ENCODE measurements at regions of chr6 and their contacts with region 1.

Region 1: DNA sequence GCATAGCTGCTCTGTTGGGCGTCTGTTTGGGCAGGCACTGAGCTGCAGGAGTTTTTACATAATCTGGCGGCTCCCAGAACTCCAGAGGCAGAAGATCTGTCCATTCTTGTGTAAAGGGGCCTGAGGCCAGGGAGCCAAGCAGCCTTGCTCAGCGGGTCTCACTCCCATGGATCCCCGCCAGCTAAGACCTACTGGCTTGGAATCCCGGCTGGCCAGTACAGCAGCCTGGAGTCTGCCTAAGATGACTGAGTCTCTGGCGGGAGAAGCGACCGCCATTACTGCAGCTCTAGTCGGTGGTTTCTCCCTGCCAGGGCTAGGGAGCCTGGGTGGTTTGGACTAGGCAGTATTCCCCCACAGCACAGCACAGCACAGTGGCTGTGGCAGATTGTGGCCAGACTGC is 268.4 kb upstream of the SYNCRIP start:
- DNase-seq: no peak
- H3K4me3 ChIP-seq: no peak overlapping the region
- H3K27ac ChIP-seq: no peak overlapping the region
- H3K4me1 ChIP-seq: no peaks in the 10 kb centered on the region
- H3K27me3 ChIP-seq: no peaks in the 10 kb centered on the region
- CTCF ChIP-seq: no peak
- POLR2A ChIP-seq: no peak

Region 2: DNA sequence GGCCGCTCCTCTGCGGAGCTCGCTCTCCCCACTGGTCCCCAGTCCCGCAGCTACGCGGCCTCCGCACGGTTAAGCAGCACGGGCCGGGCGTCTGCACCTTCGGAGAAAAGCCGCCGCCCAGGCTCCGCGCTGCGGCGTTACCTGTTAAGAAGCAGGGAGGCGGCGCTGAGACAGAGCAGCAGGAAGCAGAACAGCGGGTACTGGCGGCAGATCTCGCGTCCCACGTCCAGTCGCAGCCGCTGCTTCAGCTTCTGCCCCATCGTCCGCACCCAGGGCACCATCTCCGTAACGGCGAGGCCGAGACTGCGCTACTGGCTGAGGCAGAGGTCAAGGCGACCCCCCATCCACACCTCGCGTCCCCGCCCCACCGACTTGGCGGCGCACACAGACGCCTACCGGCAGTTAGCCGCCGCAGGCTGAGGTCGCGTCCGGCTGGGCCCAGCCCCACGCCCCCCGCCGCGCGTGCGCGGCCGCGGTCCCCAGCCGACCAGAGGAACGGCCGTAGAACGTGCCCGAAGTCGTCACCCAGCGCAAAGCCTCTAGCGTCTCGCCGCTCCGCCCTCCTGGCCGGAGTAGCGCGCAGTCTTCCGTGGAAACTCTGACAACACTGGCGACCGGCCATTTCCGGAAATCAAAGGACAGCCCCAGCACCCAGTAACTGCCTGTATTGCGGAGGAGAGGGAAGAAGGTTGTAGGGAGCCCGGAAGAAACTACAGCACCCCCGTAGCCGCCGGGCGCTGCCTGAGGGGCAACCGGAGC is 317.4 kb before region 1 on chr6 and contains the start of gene SNX14:
- intact Hi-C with region 1: no loop called
- DNase-seq: peak; percentile 95 to 98 (median 97)
- H3K4me3 ChIP-seq: peak within 1 kb of the TSS; percentile 36 to 85 (median 76)
- H3K27ac ChIP-seq: peak within 1 kb of the TSS; percentile 73 to 98 (median 95)
- H3K4me1 ChIP-seq: peaks cover 13 to 16% of the 10 kb centered on the region in 2 donors
- H3K27me3 ChIP-seq: no peaks in the 10 kb centered on the region
- CTCF ChIP-seq: peak in 2 of 6 experiments; percentile 32 to 34
- POLR2A ChIP-seq: peak; percentile 84 to 93
- total RNA-seq, gene SNX14: 60.0 to 141 (median 83.4) TPM

Region 3: DNA sequence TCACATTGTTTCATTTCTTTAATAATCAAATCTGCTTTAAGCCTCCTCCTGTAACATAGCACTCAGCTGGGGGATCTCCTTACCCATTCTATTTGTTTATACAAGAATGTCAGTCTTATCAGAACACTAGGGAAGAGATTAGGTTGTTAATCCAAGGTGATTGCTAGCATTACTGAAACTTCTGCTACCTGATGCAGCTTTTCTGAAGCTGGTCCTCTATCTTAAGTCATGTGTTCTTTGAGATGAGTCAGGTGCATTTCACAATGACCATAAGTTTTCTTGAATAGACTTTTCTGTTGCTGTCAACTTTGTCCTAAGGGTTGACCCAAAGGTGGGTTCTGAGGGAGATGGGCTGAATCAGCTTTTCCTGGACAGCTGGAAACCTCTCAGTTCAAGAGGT is 207.7 kb before region 1 on chr6:
- intact Hi-C with region 1: no loop called
- DNase-seq: no peak
- H3K4me3 ChIP-seq: no peak overlapping the region
- H3K27ac ChIP-seq: no peak overlapping the region
- H3K4me1 ChIP-seq: no peaks in the 10 kb centered on the region
- H3K27me3 ChIP-seq: no peaks in the 10 kb centered on the region
- CTCF ChIP-seq: no peak
- POLR2A ChIP-seq: no peak

Region 4: GRCh38 chr6:85764844-85765243 is 146.2 kb before region 1 on chr6:
- intact Hi-C with region 1: no loop called
- DNase-seq: no peak
- H3K4me3 ChIP-seq: no peak overlapping the region
- H3K27ac ChIP-seq: no peak overlapping the region
- H3K4me1 ChIP-seq: no peaks in the 10 kb centered on the region
- H3K27me3 ChIP-seq: no peaks in the 10 kb centered on the region
- CTCF ChIP-seq: no peak
- POLR2A ChIP-seq: no peak

Region 5: GRCh38 chr6:86192123-86192522 is 281.1 kb after region 1 on chr6:
- intact Hi-C with region 1: loop called in 1 of 2 experiments (anchors 10 kb)
- DNase-seq: peak in 2 of 7 donors; percentile 13 to 19
- H3K4me3 ChIP-seq: no peak overlapping the region
- H3K27ac ChIP-seq: no peak overlapping the region
- H3K4me1 ChIP-seq: no peaks in the 10 kb centered on the region
- H3K27me3 ChIP-seq: no peaks in the 10 kb centered on the region
- CTCF ChIP-seq: peak in 2 of 6 experiments; percentile 23 to 25
- POLR2A ChIP-seq: no peak

Measured in adrenal gland (tissue), 19 donors.